ENCODE measurements at regions of chr2 and their contacts with region 1.

Region 1: GRCh38 chr2:85288244-85288725 is 39.5 kb downstream of the TGOLN2 start:
- DNase-seq: no peak
- H3K4me3 ChIP-seq: no peak overlapping the region
- H3K4me3 Mint-ChIP-seq: no peak overlapping the region
- H3K27ac ChIP-seq: no peak overlapping the region
- H3K27ac Mint-ChIP-seq: no peak overlapping the region
- H3K4me1 ChIP-seq: peaks cover 10% of the 10 kb centered on the region
- H3K4me1 Mint-ChIP-seq: peaks cover 16 to 28% (median 23%) of the 10 kb centered on the region in 4 donors
- H3K27me3 ChIP-seq: no peaks in the 10 kb centered on the region
- H3K27me3 Mint-ChIP-seq: no peaks in the 10 kb centered on the region

Region 2: DNA sequence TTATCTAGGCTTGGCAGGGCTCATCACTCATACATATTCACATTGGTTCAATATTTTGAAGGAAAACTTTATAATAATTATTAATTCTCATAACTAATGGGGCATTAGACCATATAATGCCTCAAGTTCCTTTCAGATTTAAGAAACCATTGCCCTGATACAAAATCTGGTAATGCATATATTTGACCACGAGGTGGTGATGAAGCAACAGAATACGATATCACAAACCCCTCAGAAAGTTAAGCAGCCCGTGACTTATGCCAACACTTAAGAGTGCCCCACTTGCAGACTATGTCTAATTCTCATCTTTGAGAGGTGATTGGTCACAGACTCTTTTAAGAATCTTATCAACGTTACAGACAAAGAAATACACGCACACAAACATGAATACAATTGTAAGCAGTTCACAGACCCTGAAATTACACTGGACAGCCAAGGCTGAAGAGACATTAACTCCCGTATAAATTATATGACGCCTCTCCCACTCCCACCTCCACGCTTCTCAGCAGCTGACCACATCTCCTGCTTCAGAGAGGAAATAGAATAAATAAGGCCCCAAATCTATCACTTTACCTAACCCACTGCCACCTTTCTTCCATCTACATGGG is 792.6 kb before region 1 on chr2:
- CTCF ChIA-PET with region 1: interaction called, 4 read pairs
- POLR2A ChIA-PET with region 1: no interaction called
- intact Hi-C with region 1: loop called (anchors 1 kb)
- DNase-seq: peak; percentile 63 to 75 (median 71)
- H3K4me3 ChIP-seq: no peak overlapping the region
- H3K4me3 Mint-ChIP-seq: no peak overlapping the region
- H3K27ac ChIP-seq: no peak overlapping the region
- H3K27ac Mint-ChIP-seq: peak overlapping the region in 6 of 7 donors; percentile 39 to 84 (median 60)
- H3K4me1 ChIP-seq: peaks cover 8% of the 10 kb centered on the region
- H3K4me1 Mint-ChIP-seq: peaks cover 6 to 14% (median 7%) of the 10 kb centered on the region in 4 donors
- H3K27me3 ChIP-seq: no peaks in the 10 kb centered on the region
- H3K27me3 Mint-ChIP-seq: no peaks in the 10 kb centered on the region

Region 3: DNA sequence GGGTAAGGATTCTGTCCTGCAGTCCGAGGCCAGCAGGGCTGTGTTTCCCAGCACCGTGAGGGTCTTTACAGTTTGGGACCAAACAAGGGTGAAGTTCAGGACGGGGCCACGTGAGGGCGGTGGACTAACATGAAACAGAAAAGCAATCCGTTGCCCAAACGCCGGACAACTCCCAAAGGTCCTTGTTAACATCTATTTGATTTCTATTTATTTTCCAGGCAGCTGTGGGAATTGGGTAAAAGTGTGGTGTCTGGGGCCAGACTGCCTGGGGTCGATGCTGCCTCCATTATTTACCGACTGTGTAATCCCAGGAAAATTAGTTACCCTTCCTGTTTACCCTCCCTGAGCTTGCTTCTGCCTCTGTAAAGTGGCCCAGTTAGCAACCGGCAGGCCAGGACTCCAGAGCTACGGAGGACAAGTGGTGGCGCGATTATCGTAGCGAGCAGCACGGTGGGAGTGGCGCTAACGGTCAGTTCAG is 221.4 kb before region 1 on chr2:
- CTCF ChIA-PET with region 1: interaction called, 3 read pairs
- POLR2A ChIA-PET with region 1: no interaction called
- intact Hi-C with region 1: loop called (anchors 5 kb)
- DNase-seq: peak in 1 of 5 donors; percentile 4
- H3K4me3 ChIP-seq: no peak overlapping the region
- H3K4me3 Mint-ChIP-seq: peak overlapping the region in 2 of 8 donors; percentile 26 to 33
- H3K27ac ChIP-seq: no peak overlapping the region
- H3K27ac Mint-ChIP-seq: no peak overlapping the region
- H3K4me1 ChIP-seq: peaks cover 4% of the 10 kb centered on the region
- H3K4me1 Mint-ChIP-seq: peaks cover 0 to 8% (median 2%) of the 10 kb centered on the region in 4 donors
- H3K27me3 ChIP-seq: no peaks in the 10 kb centered on the region
- H3K27me3 Mint-ChIP-seq: peaks cover 13 to 17% of the 10 kb centered on the region in 2 donors

Region 4: DNA sequence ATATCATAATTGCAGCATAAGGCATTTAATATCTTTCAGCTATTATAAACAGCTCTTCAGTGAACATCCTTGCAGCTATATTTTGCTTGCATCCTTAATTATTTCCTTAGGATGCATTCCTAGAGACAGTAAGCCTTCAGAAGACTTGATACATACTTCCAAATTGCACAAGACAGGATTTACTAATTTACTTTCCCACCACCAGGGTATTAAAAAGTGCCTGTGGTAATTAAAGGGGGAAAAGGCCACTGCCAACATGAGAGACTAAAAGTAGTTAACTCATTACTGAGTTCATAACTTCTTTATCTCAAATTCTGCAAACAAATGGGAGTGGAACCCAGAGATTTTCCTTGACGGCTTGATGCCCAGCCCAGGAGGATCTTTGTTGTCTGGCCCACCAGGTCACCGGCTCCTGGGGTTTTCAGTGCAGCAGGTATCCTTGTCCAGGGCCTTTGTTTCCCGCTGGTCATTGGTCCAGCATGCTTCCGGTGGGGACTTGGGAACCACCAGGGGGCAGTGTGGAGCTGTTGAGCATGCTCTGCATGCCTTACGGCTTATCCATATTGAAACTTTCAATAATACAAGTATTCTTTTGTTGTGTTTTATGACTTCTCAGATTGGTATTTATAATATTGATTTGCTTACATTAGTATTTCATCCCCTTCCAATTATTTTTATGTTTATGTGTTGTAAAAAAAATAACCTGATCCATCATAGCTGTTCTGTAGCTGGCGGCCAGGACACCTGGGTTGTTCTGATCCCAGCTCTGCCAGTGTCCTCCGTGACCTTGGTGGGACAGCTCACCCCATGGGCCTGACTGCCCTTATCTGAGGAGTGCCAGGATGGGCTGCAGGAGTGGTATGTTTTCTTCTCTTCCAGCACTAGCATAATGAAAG is 21.9 kb before region 1 on chr2:
- CTCF ChIA-PET with region 1: interaction called, 181 read pairs
- POLR2A ChIA-PET with region 1: no interaction called
- intact Hi-C with region 1: loop called (anchors 1 kb)
- DNase-seq: peak; percentile 51 to 63 (median 54)
- H3K4me3 ChIP-seq: no peak overlapping the region
- H3K4me3 Mint-ChIP-seq: no peak overlapping the region
- H3K27ac ChIP-seq: no peak overlapping the region
- H3K27ac Mint-ChIP-seq: no peak overlapping the region
- H3K4me1 ChIP-seq: no peaks in the 10 kb centered on the region
- H3K4me1 Mint-ChIP-seq: no peaks in the 10 kb centered on the region
- H3K27me3 ChIP-seq: no peaks in the 10 kb centered on the region
- H3K27me3 Mint-ChIP-seq: peaks cover 2 to 12% of the 10 kb centered on the region in 2 donors

Region 5: GRCh38 chr2:86017901-86018896 is 729.9 kb after region 1 on chr2:
- CTCF ChIA-PET with region 1: no interaction called
- POLR2A ChIA-PET with region 1: no interaction called
- intact Hi-C with region 1: no loop called
- DNase-seq: no peak
- H3K4me3 ChIP-seq: no peak overlapping the region
- H3K4me3 Mint-ChIP-seq: no peak overlapping the region
- H3K27ac ChIP-seq: no peak overlapping the region
- H3K27ac Mint-ChIP-seq: peak overlapping the region in 5 of 7 donors; percentile 57 to 90 (median 68)
- H3K4me1 ChIP-seq: peaks cover 14% of the 10 kb centered on the region
- H3K4me1 Mint-ChIP-seq: peaks cover 6 to 19% (median 11%) of the 10 kb centered on the region in 4 donors
- H3K27me3 ChIP-seq: no peaks in the 10 kb centered on the region
- H3K27me3 Mint-ChIP-seq: no peaks in the 10 kb centered on the region